ENCODE measurements at regions of chr2 and their contacts with region 1.

Region 1: DNA sequence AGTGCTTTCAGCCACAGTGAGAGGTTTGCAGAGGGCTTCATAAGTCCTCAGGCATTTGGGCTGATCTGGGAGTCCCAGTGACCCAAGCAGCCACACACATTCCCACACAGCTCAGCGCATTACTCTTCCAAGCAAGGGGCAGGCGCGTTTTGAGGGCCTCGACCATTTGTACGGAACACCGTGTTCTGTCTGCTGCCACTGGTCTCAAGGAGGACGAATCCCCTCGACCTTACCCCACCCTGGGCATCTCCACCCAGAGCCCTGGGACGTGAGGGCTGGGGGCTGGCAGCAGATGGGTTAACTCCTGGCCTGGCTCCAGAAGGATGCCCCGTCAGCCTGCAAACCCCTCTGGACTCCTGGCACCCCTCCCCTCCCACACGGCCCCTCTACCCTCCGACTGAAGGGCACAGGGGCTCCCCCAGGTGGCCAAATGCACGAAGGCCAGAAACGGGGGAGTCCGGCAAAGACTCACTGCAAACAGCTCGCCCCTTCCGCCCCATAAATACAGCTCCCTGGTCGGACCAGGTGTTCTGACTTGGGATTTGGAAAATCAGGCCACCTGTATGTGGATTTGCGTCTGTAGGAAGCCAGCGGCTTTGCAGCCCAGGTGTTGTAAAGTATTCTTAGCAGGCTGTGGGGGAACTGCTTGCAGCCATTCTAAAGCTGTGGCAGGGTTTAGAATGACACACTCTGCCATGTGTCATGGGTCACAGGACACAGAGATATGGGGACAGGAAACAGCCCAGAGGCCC is 33.6 kb upstream of the PTMA start:
- DNase-seq: peak; percentile 93
- ATAC-seq: peak; percentile 58
- H3K4me3 Mint-ChIP-seq: no peak overlapping the region
- H3K27ac Mint-ChIP-seq: peak overlapping the region; percentile 94
- H3K4me1 Mint-ChIP-seq: peaks cover 49% of the 10 kb centered on the region
- H3K27me3 Mint-ChIP-seq: no peaks in the 10 kb centered on the region
- CTCF ChIP-seq: peak; percentile 56

Region 2: DNA sequence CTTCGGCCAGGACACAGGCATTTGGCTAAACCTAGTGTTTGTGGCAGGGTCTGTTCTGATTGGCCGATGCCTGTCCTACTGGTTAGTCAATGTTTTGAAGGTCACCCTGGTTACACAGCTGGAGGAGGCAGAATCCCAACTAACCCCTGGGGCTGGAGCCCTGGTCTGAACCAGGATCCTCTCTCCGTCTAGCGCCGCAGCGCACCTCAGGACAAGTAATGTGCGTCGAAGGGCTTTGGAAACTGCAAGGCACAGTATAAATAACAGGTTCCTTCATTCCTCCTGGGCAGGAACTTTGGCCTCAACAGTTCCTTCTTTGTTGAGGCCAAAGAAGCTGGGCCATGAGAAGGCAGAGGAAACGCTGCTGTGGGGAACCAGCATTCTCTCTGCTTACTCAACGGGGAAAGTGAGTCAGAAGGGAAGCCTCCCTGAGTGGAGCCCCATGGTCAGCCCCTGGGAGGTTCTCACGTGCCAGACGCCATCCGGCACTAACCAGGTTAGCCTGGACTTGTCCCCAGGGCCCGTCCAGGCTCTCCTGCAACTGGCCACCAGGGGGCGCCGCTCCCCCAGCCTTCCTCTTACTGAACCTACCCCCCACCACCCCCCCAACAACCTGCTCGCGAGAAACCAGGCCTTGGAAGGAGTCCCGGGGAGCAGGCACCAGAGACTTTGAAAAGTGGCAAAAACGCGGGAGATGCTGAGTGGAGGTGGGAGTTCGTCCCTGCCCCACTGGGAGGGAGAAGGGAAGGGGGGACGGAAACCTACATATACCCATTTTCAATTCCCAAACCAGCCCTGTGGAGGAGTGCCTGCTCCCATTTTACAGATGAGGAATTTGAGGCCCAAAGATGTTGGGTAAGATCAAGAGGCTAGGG is 62.3 kb before region 1 on chr2:
- CTCF ChIA-PET with region 1: interaction called, 236 read pairs
- POLR2A ChIA-PET with region 1: interaction called, 145 read pairs
- DNase-seq: peak; percentile 96
- ATAC-seq: peak; percentile 41
- H3K4me3 Mint-ChIP-seq: peak overlapping the region; percentile 77
- H3K27ac Mint-ChIP-seq: peak overlapping the region; percentile 100
- H3K4me1 Mint-ChIP-seq: peaks cover 58% of the 10 kb centered on the region
- H3K27me3 Mint-ChIP-seq: peaks cover 2% of the 10 kb centered on the region; the same call in 1 of the 2 replicates
- CTCF ChIP-seq: peak; percentile 99

Region 3: GRCh38 chr2:231632559-231633142 is 42.1 kb before region 1 on chr2:
- CTCF ChIA-PET with region 1: interaction called, 41 read pairs
- POLR2A ChIA-PET with region 1: interaction called, 4 read pairs
- DNase-seq: no peak
- ATAC-seq: no peak
- H3K4me3 Mint-ChIP-seq: no peak overlapping the region
- H3K27ac Mint-ChIP-seq: no peak overlapping the region
- H3K4me1 Mint-ChIP-seq: peaks cover 9% of the 10 kb centered on the region; the same call in 1 of the 2 replicates
- H3K27me3 Mint-ChIP-seq: no peaks in the 10 kb centered on the region
- CTCF ChIP-seq: no peak

Region 4: GRCh38 chr2:231655897-231656296 is 18.9 kb before region 1 on chr2:
- CTCF ChIA-PET with region 1: interaction called, 48 read pairs
- POLR2A ChIA-PET with region 1: interaction called, 15 read pairs
- DNase-seq: no peak
- ATAC-seq: peak; percentile 74
- H3K4me3 Mint-ChIP-seq: 0 out of 2 replicates have a peak overlapping the region, but pooled peaks have one; percentile 13
- H3K27ac Mint-ChIP-seq: peak overlapping the region; percentile 90
- H3K4me1 Mint-ChIP-seq: peaks cover 18% of the 10 kb centered on the region
- H3K27me3 Mint-ChIP-seq: peaks cover 12% of the 10 kb centered on the region
- CTCF ChIP-seq: no peak

Region 5: GRCh38 chr2:231696007-231696371 is 21.2 kb after region 1 on chr2:
- CTCF ChIA-PET with region 1: interaction called, 206 read pairs
- POLR2A ChIA-PET with region 1: interaction called, 3 read pairs
- DNase-seq: no peak
- ATAC-seq: no peak
- H3K4me3 Mint-ChIP-seq: no peak overlapping the region
- H3K27ac Mint-ChIP-seq: no peak overlapping the region
- H3K4me1 Mint-ChIP-seq: peaks cover 6% of the 10 kb centered on the region
- H3K27me3 Mint-ChIP-seq: peaks cover 3% of the 10 kb centered on the region; the same call in 1 of the 2 replicates
- CTCF ChIP-seq: no peak

Region 6: DNA sequence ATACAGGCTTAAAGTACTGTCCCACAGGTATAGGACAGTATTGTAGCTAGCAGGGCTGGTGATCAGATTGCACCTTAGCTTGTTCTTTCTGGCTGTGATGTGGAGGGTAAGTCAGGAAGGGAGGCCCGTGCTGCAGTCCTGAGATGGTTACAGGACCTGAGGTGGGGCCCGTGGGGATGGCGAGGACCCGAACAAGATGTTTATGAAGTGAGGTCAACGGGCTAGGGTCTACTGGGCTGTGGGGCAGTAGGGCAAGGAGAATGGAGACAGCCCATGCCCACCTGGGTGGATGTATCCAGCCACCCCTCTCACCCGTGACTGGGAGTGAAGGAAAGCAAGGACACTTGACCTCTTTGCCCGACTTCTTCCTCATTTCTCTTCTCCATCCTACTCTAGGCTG is 51.5 kb after region 1 on chr2:
- CTCF ChIA-PET with region 1: interaction called, 17 read pairs
- POLR2A ChIA-PET with region 1: no interaction called
- DNase-seq: no peak
- ATAC-seq: no peak
- H3K4me3 Mint-ChIP-seq: no peak overlapping the region
- H3K27ac Mint-ChIP-seq: no peak overlapping the region
- H3K4me1 Mint-ChIP-seq: peaks cover 9% of the 10 kb centered on the region
- H3K27me3 Mint-ChIP-seq: no peaks in the 10 kb centered on the region
- CTCF ChIP-seq: no peak

Region 7: DNA sequence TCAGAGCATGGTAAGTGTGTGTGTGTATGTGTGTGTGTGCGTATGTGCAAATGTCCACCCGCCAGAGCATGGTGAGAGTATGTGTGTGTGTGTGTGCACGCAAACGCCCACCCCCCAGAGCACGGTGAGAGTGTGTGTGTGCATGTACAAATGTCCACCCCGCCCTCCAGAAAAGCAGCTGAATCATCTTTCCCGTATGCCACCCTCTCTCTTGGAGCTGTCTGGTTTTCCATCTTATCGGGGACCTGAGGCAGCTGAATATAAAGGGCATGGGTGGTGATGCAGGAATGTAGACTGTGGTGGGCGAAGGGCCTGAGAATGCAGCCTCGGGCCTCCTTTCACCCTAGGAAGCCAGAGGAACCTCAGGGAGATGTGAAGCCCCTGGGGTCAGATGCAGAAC is 178.3 kb after region 1 on chr2:
- CTCF ChIA-PET with region 1: no interaction called
- POLR2A ChIA-PET with region 1: no interaction called
- DNase-seq: no peak
- ATAC-seq: no peak
- H3K4me3 Mint-ChIP-seq: no peak overlapping the region
- H3K27ac Mint-ChIP-seq: no peak overlapping the region
- H3K4me1 Mint-ChIP-seq: no peaks in the 10 kb centered on the region
- H3K27me3 Mint-ChIP-seq: peaks cover 14% of the 10 kb centered on the region
- CTCF ChIP-seq: no peak

Measured in WTC11 (cell line).